IMR-90 (cell line): ENCODE measurements at regions of chr17 and their contacts with region 1.

Region 1: DNA sequence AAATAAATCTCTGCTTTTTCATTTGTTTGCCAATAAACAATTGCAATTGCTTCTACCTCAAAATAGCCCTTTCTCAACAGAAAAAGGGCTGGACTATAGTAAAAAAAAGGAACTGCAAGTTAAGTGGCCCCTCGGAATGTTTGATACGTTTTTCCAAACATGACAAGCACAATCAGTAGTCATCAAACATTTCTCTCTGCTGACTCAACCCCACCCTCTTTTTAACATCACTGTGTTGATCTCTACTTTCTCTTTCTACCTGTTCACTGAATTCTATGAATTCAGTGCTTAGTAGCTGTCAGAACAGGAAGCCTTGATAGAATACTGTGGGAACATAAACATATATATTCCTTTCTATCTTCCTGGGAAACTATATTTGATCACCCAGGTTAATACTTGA is 116.5 kb upstream of the AXIN2 start:
- DNase-seq: peak; percentile 29
- ATAC-seq: no peak
- H3K4me3 ChIP-seq: no peak overlapping the region
- H3K27ac ChIP-seq: no peak overlapping the region
- H3K4me1 ChIP-seq: no peaks in the 10 kb centered on the region
- H3K27me3 ChIP-seq: no peaks in the 10 kb centered on the region
- CTCF ChIP-seq: no peak
- POLR2A ChIP-seq: no peak
- RAD21 ChIP-seq: no peak

Region 2: DNA sequence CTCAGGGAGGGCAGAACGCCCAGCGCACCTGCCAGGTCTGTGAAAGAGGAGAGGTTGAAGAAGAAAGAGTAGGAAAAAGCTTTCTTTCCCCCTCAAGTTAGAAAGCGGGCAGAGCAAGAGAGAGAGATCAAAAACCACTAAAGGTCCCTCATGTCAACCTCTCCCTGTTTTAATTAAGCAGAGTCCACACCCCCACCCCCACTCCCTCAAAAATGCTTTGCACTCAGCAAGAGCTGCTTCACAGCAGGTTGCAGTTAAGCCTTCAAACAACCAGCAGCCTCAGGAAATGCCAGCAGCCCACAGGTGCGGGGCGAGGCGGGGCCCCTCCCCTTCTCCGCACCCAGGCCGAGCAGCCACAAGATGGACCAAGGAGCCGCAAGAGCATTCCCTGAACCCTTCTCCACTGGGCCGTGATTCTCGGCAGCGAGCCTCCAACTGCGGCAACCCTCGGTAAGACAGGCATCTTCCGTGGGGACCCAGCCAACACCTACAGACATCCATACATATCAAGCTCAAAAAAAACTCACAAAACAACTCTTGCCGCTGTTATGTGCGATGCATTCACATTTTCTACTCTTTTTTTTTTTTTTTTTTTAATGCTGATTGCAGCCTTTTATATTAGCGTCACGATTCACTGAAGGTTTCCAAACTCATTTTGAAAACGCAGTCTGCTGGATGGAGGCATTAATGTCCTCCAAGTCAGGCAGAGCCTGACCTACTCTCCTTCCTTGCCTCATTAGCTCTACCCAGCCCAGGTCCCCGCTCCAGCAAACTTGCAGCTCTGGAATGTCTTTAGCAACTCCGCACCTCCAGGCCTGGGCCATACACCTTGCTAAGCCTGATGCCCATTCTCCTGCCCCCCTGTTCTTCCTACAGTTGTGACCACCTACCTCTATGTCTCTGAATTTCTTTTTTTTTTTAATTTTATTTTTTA is 182.5 kb before region 1 on chr17:
- CTCF ChIA-PET with region 1: interaction called, 11 read pairs
- POLR2A ChIA-PET with region 1: no interaction called
- dilution Hi-C with region 1: no loop called
- in situ Hi-C with region 1: no loop called
- intact Hi-C with region 1: no loop called
- DNase-seq: no peak
- ATAC-seq: no peak
- H3K4me3 ChIP-seq: no peak overlapping the region
- H3K27ac ChIP-seq: no peak overlapping the region
- H3K4me1 ChIP-seq: no peaks in the 10 kb centered on the region
- H3K27me3 ChIP-seq: peaks cover 20% of the 10 kb centered on the region
- CTCF ChIP-seq: no peak
- POLR2A ChIP-seq: no peak
- RAD21 ChIP-seq: no peak

Region 3: DNA sequence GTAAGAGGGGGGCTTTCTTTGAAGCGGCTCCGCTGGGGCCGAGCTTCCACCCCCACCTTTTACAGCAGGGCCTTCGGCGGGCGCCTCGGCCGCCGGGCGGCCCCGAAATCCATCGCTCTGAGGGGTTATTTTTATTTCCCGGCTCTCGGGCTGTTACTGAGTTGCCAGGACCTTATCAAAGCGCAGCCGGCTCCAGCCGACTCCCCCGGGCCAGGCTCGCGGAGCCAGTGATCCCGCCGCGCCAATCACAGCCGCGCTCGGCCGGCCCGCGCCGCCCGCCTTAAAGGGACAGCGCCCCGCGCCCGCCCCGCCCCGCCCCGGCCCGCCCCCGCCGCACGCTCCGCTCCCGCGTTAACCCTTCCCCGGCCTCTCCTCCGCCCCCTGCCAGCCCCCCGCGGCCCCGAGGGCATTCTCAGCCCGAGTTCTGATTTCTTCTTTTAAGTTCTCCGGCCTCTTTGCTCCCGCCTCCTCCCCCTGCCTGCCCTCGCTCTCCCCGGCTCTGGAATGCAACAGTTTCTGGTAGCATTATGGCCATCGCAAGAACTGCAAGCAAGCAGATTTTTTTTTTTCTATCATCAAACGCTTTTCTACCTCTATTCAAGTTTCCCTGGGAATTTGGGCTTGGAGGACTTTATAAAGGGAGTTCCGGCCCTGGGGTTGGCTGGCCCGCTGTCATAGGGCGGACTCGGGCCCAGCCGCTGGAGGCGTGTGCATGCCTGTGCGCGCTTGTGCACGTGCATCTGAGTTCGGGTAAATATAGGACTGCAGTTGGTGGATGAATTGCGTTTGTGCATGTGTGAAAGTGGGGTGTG is 116.3 kb before region 1 on chr17 and contains the start of gene AXIN2:
- CTCF ChIA-PET with region 1: no interaction called
- POLR2A ChIA-PET with region 1: no interaction called
- dilution Hi-C with region 1: no loop called
- in situ Hi-C with region 1: no loop called
- intact Hi-C with region 1: no loop called
- DNase-seq: peak; percentile 85
- ATAC-seq: peak; percentile 91
- H3K4me3 ChIP-seq: peak within 1 kb of the TSS; percentile 57
- H3K27ac ChIP-seq: peak within 1 kb of the TSS; percentile 53
- H3K4me1 ChIP-seq: peaks cover 5% of the 10 kb centered on the region; the same call in 1 of the 2 replicates
- H3K27me3 ChIP-seq: peaks cover 19% of the 10 kb centered on the region
- CTCF ChIP-seq: no peak; the same call in 1 of the 2 replicates
- POLR2A ChIP-seq: no peak
- RAD21 ChIP-seq: no peak; the same call in 1 of the 2 replicates
- total RNA-seq, gene AXIN2: 1.8 and 1.9 TPM in 2 replicates

Region 4: DNA sequence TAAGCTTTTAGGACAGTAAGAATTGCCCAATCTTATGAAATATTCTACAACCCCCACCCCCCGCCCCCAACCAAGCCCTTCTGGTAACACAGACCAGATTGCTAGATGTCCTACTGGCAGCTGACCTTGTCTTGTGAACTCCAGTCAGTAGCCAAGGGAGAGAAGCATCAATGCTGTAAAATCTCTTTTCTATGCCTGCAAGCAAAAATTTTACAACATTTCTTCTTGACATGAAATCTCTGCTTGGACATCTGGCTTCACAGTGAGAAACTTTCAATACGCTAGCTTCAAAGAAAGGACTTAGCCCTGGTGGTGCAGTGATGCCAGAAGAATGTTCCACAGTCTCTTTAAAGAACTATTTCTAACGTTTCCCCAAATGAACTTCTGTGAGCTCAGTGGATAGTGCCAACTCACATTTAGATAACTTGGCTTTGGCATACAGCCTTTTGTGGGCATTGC is 52.8 kb after region 1 on chr17:
- CTCF ChIA-PET with region 1: no interaction called
- POLR2A ChIA-PET with region 1: interaction called, 10 read pairs
- dilution Hi-C with region 1: no loop called
- in situ Hi-C with region 1: no loop called
- intact Hi-C with region 1: no loop called
- DNase-seq: no peak
- ATAC-seq: no peak
- H3K4me3 ChIP-seq: no peak overlapping the region
- H3K27ac ChIP-seq: no peak overlapping the region
- H3K4me1 ChIP-seq: no peaks in the 10 kb centered on the region
- H3K27me3 ChIP-seq: no peaks in the 10 kb centered on the region
- CTCF ChIP-seq: no peak
- POLR2A ChIP-seq: no peak
- RAD21 ChIP-seq: no peak